ENCODE measurements at regions of chr19 and their contacts with region 1.

Region 1: GRCh38 chr19:2236314-2237050 is at the starts of genes PLEKHJ1 and SF3A2:
- DNase-seq: peak; percentile 99
- H3K4me3 ChIP-seq: peak within 1 kb of the TSS; percentile 62 to 99 (median 76)
- H3K27ac ChIP-seq: peak within 1 kb of the TSS; percentile 97 to 99 (median 98)
- H3K4me1 ChIP-seq: peaks cover 0 to 68% (median 62%) of the 10 kb centered on the region in 4 donors
- H3K27me3 ChIP-seq: no peaks in the 10 kb centered on the region
- CTCF ChIP-seq: peak; percentile 96 to 100 (median 99)
- EP300 ChIP-seq: peak in 1 of 4 donors; percentile 25
- POLR2A ChIP-seq: peak; percentile 81 to 85
- total RNA-seq, gene PLEKHJ1: 40.7 to 57.3 (median 42.8) TPM
- total RNA-seq, gene SF3A2: 17.5 to 59.8 (median 24.4) TPM

Region 2: GRCh38 chr19:2161688-2162053 is 74.8 kb before region 1 on chr19:
- intact Hi-C with region 1: loop called (anchors 2 kb)
- DNase-seq: no peak
- H3K4me3 ChIP-seq: no peak overlapping the region
- H3K27ac ChIP-seq: no peak overlapping the region
- H3K4me1 ChIP-seq: peaks cover 0 to 28% (median 26%) of the 10 kb centered on the region in 4 donors
- H3K27me3 ChIP-seq: no peaks in the 10 kb centered on the region
- CTCF ChIP-seq: no peak
- EP300 ChIP-seq: no peak
- POLR2A ChIP-seq: no peak

Region 3: GRCh38 chr19:2269244-2269947 is 32.9 kb after region 1 on chr19:
- intact Hi-C with region 1: loop called (anchors 1 kb)
- DNase-seq: peak; percentile 99
- H3K4me3 ChIP-seq: peak overlapping the region; percentile 68 to 97 (median 92)
- H3K27ac ChIP-seq: peak overlapping the region; percentile 98 to 99 (median 98)
- H3K4me1 ChIP-seq: peaks cover 0 to 54% (median 50%) of the 10 kb centered on the region in 4 donors
- H3K27me3 ChIP-seq: no peaks in the 10 kb centered on the region
- CTCF ChIP-seq: peak in 2 of 4 experiments; percentile 5 to 39
- EP300 ChIP-seq: no peak
- POLR2A ChIP-seq: peak; percentile 100

Region 4: DNA sequence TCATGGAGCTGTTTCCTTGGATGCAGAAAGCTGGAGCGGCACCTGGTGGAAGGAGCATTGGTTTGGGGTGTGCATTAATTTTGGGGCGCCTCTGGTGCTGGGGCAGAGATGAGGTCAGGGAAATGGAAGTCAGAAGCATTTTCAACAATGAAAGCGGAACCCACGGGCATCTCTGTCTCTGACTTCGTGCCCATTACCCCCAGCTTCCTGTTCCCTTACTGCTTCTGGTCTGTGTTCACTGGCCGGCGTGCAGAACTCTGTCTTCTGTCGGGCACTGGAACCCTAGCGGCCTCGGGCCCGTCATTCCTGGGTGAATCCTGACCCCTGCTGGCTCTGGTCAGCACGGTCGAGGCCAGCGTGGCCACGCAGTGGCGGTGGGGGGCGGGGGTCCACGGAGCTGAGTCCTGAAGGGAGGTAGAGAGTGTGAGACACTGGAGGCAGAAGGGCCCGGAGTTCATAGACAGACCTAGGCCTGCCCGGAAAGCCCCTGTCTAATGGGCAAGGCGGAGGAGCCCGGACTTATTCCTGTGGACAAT is 79.4 kb after region 1 on chr19:
- intact Hi-C with region 1: loop called (anchors 2 kb)
- DNase-seq: peak; percentile 85
- H3K4me3 ChIP-seq: no peak overlapping the region
- H3K27ac ChIP-seq: no peak overlapping the region
- H3K4me1 ChIP-seq: peaks cover 0 to 8% (median 0%) of the 10 kb centered on the region in 4 donors
- H3K27me3 ChIP-seq: peaks cover 13 to 29% (median 25%) of the 10 kb centered on the region in 3 donors
- CTCF ChIP-seq: peak; percentile 47 to 74 (median 58)
- EP300 ChIP-seq: no peak
- POLR2A ChIP-seq: no peak

Region 5: GRCh38 chr19:2475702-2476450 is 239.4 kb after region 1 on chr19 and contains the start of gene GADD45B:
- intact Hi-C with region 1: no loop called
- DNase-seq: peak; percentile 99
- H3K4me3 ChIP-seq: peak within 1 kb of the TSS; percentile 71 to 97 (median 94)
- H3K27ac ChIP-seq: peak within 1 kb of the TSS; percentile 91 to 96 (median 94)
- H3K4me1 ChIP-seq: peaks cover 0 to 35% (median 20%) of the 10 kb centered on the region in 4 donors
- H3K27me3 ChIP-seq: no peaks in the 10 kb centered on the region
- CTCF ChIP-seq: no peak
- EP300 ChIP-seq: peak in 2 of 4 donors; percentile 42 to 73
- POLR2A ChIP-seq: peak; percentile 100
- total RNA-seq, gene GADD45B: 82.0 to 708 (median 108) TPM